AG04450 (cell line): ENCODE measurements at regions of chr1 and their contacts with region 1.

Region 1: GRCh38 chr1:209368864-209369598 is 214.5 kb upstream of the CAMK1G start:
- DNase-seq: peak; percentile 83
- H3K4me3 ChIP-seq: no peak overlapping the region
- H3K27ac ChIP-seq: peak overlapping the region; percentile 70
- H3K27me3 ChIP-seq: no peaks in the 10 kb centered on the region
- CTCF ChIP-seq: no peak

Region 2: DNA sequence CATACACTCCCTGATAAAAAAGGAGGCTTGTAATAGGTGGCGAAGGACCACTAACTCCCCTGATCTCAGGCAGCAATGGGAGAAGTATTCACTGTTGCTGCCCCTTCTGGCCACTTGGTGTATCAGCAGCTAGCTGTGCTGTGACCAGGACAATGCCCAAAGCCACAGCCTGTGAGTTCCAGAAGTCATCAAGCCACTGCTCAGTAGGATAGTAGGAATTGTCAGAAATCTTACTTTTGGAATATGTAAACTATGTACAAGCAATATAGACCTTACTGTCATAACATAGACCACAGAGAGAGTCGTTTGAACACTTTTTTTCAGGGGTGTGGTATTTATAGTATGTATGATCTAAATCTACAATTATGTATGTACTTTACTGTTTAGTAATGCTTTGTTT is 33.9 kb before region 1 on chr1:
- CTCF ChIA-PET with region 1: interaction called, 14 read pairs
- POLR2A ChIA-PET with region 1: no interaction called
- DNase-seq: peak; percentile 4
- H3K4me3 ChIP-seq: no peak overlapping the region
- H3K27ac ChIP-seq: no peak overlapping the region
- H3K27me3 ChIP-seq: no peaks in the 10 kb centered on the region
- CTCF ChIP-seq: peak; percentile 89